ENCODE measurements at regions of chr1 and their contacts with region 1.

Region 1: DNA sequence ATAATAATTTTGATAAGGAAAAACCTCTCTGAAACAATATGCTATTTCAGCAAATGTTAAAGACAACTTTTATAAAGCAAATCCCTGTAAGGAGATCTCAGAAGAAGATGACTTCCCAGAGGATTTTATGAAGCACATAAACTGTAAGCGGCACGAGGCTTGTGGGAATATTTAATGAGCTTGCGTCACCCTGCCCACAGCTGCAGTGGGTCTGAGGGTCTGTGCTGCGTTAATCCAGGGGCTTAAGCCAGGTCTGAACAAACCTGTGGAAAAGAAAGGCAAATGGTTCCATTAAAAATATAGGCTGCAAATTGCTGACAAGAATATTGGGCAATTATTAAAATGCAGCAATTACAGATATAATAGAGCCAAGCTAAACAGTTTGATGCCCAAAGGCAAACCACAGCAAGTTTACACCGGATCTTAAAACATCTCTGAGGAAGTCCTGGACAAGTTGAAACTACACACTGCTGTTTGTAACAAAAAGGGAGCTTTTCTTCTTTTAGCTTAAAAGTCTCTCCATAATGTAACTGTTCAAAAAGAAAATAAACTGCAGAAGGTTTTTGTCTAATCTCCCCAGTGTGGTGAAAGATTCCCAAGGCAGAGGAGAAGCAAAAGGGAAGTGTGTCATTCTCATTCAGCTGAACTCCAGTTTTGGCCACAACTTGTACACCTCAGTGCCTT is 21.8 kb downstream of the TGFBR3 start:
- DNase-seq: peak in 1 of 2 experiments; percentile 72
- H3K4me3 ChIP-seq: peak overlapping the region; percentile 21; the same call in 1 of the 2 replicates
- H3K27ac ChIP-seq: peak overlapping the region; percentile 55
- H3K4me1 ChIP-seq: peaks cover 21% of the 10 kb centered on the region
- H3K27me3 ChIP-seq: no peaks in the 10 kb centered on the region
- CTCF ChIP-seq: no peak

Region 2: DNA sequence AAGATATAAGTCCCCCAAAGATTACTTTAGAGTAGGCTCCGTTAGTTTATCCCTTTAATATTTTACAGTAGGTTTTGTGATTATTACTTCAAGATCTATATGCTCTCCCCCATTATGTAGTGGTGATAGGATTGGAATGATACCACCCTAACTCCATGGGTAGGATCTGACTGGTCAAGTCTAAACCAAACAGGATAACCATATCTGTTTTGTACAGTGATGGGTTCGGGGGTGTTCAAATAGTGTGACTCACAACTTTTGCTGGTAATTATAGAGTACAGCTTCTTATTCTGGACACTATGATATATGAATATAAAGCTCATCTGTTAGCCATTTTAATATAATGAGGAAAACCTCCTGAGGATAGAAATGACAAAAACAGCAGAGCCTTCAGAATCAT is 708.4 kb after region 1 on chr1:
- CTCF ChIA-PET with region 1: no interaction called
- POLR2A ChIA-PET with region 1: no interaction called
- intact Hi-C with region 1: loop called (anchors 5 kb)
- DNase-seq: no peak
- H3K4me3 ChIP-seq: no peak overlapping the region
- H3K27ac ChIP-seq: no peak overlapping the region
- H3K4me1 ChIP-seq: no peaks in the 10 kb centered on the region
- H3K27me3 ChIP-seq: no peaks in the 10 kb centered on the region
- CTCF ChIP-seq: no peak